ENCODE measurements at regions of chr13 and their contacts with region 1.

Region 1: DNA sequence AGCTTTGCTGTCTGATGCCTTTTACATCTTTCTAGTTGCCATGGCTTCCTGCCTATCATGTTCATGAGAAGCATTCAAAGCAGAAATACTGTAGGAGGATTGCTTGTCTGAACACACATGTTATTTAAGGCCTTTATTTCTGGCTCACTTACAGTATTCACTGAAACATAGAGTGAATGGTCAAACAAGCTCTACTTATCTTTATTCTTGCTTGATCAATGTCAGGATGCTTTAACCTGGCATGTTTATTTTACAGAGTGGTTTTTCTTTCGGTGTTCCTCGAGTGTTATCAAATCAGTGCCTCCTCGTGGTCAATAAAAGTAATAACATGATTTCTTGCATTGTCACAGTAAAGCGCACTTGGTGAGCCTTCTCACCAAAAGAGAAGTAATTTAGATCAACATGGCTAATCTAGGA is 73.5 kb upstream of the PCDH17 start:
- DNase-seq: peak; percentile 38
- H3K4me3 Mint-ChIP-seq: no peak overlapping the region
- H3K27ac Mint-ChIP-seq: no peak overlapping the region
- H3K4me1 Mint-ChIP-seq: peaks cover 4% of the 10 kb centered on the region
- H3K27me3 Mint-ChIP-seq: no peaks in the 10 kb centered on the region
- CTCF ChIP-seq: peak; percentile 28

Region 2: GRCh38 chr13:56561327-56561726 is 996.7 kb before region 1 on chr13:
- CTCF ChIA-PET with region 1: no interaction called
- POLR2A ChIA-PET with region 1: no interaction called
- intact Hi-C with region 1: loop called (anchors 5 kb)
- DNase-seq: peak; percentile 23
- H3K4me3 Mint-ChIP-seq: no peak overlapping the region
- H3K27ac Mint-ChIP-seq: no peak overlapping the region
- H3K4me1 Mint-ChIP-seq: no peaks in the 10 kb centered on the region
- H3K27me3 Mint-ChIP-seq: no peaks in the 10 kb centered on the region
- CTCF ChIP-seq: peak; percentile 22

Region 3: DNA sequence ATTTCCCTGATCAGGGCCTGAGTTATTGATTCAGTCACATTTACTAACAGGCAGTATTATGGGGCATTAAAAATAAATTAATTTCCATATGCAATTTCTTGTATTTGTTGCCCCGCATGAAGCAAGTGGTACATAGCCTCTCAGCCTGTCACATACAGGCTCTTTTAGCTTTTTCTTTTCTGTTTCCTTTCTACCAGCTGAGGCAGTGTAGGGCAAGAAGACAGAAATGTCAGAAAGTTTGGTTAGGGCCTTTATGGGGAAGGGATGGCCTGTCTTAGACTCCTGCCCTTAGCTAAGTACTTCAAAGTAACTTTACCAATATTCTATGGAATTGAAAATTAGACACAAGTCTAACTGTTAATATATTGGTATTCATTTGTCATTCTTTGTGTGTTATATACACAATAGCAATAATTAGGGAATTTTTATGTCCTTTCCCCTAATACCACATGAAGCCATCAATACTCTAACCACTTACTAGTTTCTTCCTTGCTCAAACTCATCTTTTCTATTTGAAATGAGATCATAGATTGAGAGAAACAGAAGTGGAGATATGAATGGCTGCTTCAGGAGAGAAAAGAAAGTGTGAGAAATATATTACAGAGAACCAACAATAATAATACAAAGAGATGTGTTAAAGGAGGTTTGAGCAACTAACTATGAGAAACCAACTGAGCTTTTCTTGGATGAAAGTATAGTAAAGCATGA is 743.1 kb after region 1 on chr13:
- CTCF ChIA-PET with region 1: no interaction called
- POLR2A ChIA-PET with region 1: no interaction called
- intact Hi-C with region 1: no loop called
- DNase-seq: no peak
- H3K4me3 Mint-ChIP-seq: no peak overlapping the region
- H3K27ac Mint-ChIP-seq: no peak overlapping the region
- H3K4me1 Mint-ChIP-seq: no peaks in the 10 kb centered on the region
- H3K27me3 Mint-ChIP-seq: no peaks in the 10 kb centered on the region
- CTCF ChIP-seq: no peak

Measured in MCF 10A (cell line).